WTC11 (cell line): ENCODE measurements at regions of chr7 and their contacts with region 1.

Region 1: DNA sequence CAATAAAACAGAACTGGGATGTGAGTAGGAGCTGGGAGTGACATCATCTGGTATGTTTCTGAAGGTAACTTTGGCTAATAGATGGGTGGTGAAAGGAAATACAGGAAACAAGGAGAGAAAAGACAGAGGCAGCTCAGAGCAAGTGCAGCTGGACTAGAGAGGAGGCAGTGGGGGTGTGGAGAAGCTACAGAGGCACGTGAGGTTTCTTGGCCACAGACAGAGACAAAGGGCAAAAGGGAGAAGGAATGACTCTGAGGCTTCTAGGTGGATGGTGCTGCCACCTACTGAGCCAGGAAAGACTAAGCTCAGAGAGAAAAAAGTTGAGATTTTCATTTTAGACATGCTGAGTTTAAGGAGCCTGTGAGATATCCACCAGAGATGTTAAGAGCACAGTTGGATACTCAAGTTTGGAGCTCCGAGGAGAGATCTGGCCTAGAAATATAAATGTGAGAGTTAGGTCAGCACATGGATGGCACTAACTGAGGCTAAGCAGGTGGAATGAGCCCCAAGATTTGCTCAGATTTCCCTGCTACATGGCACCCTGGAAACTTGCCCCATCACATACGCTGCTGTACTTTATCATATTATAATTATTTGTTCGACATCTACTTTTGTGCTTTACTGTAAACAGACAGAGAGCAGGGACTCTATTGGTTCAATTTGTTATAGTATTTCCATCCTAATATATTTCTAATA is 293.0 kb upstream of the IMMP2L start:
- DNase-seq: peak; percentile 25
- ATAC-seq: peak; percentile 71
- H3K4me3 Mint-ChIP-seq: no peak overlapping the region
- H3K27ac Mint-ChIP-seq: peak overlapping the region; percentile 65
- H3K4me1 Mint-ChIP-seq: peaks cover 42% of the 10 kb centered on the region
- H3K27me3 Mint-ChIP-seq: peaks cover 9% of the 10 kb centered on the region
- CTCF ChIP-seq: no peak

Region 2: DNA sequence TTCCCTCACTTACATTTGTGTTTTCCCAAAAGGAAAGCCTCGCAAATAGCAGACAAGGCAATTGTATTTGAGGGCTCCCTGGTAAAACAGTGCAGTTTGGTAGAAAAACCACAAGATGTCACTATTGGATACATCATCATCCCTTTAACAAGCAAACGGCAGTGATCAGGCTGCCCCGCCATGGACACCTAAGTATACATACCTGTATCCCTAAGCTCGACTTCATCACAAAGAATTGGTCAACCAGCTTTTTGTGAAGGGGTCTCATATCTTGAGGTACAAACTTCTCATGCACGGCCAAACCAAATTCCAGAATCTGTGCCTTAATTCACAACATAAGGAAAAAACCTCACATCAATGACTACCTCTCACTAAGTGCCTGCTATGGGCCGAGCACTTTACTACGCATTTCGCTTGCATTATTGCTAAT is 113.5 kb before region 1 on chr7:
- CTCF ChIA-PET with region 1: interaction called, 17 read pairs
- POLR2A ChIA-PET with region 1: no interaction called
- DNase-seq: peak; percentile 59
- ATAC-seq: peak; percentile 87
- H3K4me3 Mint-ChIP-seq: no peak overlapping the region
- H3K27ac Mint-ChIP-seq: no peak overlapping the region
- H3K4me1 Mint-ChIP-seq: peaks cover 15% of the 10 kb centered on the region
- H3K27me3 Mint-ChIP-seq: no peaks in the 10 kb centered on the region
- CTCF ChIP-seq: peak; percentile 31; the same call in 1 of the 2 replicates

Region 3: GRCh38 chr7:111752022-111752582 is 103.2 kb before region 1 on chr7:
- CTCF ChIA-PET with region 1: interaction called, 52 read pairs
- POLR2A ChIA-PET with region 1: interaction called, 3 read pairs
- DNase-seq: peak; percentile 80
- ATAC-seq: peak; percentile 81
- H3K4me3 Mint-ChIP-seq: no peak overlapping the region
- H3K27ac Mint-ChIP-seq: no peak overlapping the region
- H3K4me1 Mint-ChIP-seq: peaks cover 7% of the 10 kb centered on the region
- H3K27me3 Mint-ChIP-seq: no peaks in the 10 kb centered on the region
- CTCF ChIP-seq: peak; percentile 82

Region 4: GRCh38 chr7:111763221-111763801 is 92.0 kb before region 1 on chr7:
- CTCF ChIA-PET with region 1: interaction called, 111 read pairs
- POLR2A ChIA-PET with region 1: no interaction called
- DNase-seq: peak; percentile 54
- ATAC-seq: peak; percentile 98
- H3K4me3 Mint-ChIP-seq: no peak overlapping the region
- H3K27ac Mint-ChIP-seq: no peak overlapping the region
- H3K4me1 Mint-ChIP-seq: no peaks in the 10 kb centered on the region
- H3K27me3 Mint-ChIP-seq: no peaks in the 10 kb centered on the region
- CTCF ChIP-seq: peak; percentile 50

Region 5: GRCh38 chr7:111771638-111772037 is 83.7 kb before region 1 on chr7:
- CTCF ChIA-PET with region 1: interaction called, 11 read pairs
- POLR2A ChIA-PET with region 1: no interaction called
- DNase-seq: no peak
- ATAC-seq: peak; percentile 88
- H3K4me3 Mint-ChIP-seq: no peak overlapping the region
- H3K27ac Mint-ChIP-seq: peak overlapping the region; percentile 50
- H3K4me1 Mint-ChIP-seq: peaks cover 26% of the 10 kb centered on the region
- H3K27me3 Mint-ChIP-seq: no peaks in the 10 kb centered on the region
- CTCF ChIP-seq: no peak

Region 6: DNA sequence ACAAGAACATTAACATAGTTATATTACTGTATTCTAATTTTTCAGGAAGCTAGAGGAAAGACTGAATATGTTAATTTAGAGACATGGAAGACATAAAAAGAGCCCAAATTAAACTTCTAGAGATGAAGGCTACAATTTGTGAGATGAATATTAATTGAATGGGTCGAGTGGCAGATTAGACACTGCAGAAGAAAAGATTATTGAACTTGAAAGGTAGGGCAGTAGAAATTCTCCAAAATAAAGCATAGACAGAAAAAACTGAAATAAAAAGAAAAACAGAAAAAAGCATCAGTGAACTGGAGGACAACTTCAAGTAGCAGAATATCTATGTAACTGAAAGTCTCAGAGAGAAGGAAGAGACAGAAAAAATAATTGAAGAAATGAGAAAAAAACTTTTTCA is 18.7 kb before region 1 on chr7:
- CTCF ChIA-PET with region 1: interaction called, 13 read pairs
- POLR2A ChIA-PET with region 1: interaction called, 3 read pairs
- DNase-seq: no peak
- ATAC-seq: no peak
- H3K4me3 Mint-ChIP-seq: no peak overlapping the region
- H3K27ac Mint-ChIP-seq: no peak overlapping the region
- H3K4me1 Mint-ChIP-seq: peaks cover 3% of the 10 kb centered on the region; the same call in 1 of the 2 replicates
- H3K27me3 Mint-ChIP-seq: no peaks in the 10 kb centered on the region
- CTCF ChIP-seq: no peak

Region 7: DNA sequence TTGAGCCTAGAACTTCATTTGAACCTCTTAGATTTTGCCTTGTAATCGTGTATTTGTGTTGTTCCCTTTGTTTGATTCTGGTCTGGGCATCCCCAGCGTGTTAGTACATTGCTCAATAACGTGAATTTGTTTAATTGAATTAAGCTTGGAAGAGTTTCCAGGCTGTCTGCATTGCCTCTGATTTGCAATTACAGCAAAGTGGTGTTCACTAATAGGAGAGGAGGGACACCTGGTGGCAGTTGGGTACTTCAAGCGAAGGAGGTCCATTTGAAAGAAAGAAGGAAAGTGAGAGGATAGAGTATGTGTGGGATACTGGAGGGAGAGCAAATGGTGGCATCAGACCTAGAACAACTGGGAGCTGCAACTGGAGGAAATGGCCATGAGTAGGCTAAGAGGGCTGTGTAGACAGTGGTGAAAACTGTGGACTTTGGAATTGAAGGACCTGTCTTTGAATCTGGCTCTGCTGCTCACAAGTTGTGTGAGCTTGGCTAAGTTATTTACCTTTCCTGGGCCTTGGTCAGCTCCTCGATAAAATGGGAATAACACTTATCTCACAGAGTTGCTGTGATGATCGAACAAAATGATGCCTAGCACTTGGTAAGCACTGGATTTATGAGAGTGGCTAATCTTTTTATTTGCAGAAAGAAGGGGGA is 640.6 kb after region 1 on chr7:
- CTCF ChIA-PET with region 1: interaction called, 10 read pairs
- POLR2A ChIA-PET with region 1: no interaction called
- DNase-seq: peak; percentile 47
- ATAC-seq: peak; percentile 94
- H3K4me3 Mint-ChIP-seq: no peak overlapping the region
- H3K27ac Mint-ChIP-seq: no peak overlapping the region
- H3K4me1 Mint-ChIP-seq: peaks cover 2% of the 10 kb centered on the region; the same call in 1 of the 2 replicates
- H3K27me3 Mint-ChIP-seq: peaks cover 2% of the 10 kb centered on the region; the same call in 1 of the 2 replicates
- CTCF ChIP-seq: 0 out of 2 replicates have a peak, but pooled peaks have one; percentile 17